ENCODE measurements at regions of chr2 and their contacts with region 1.

Region 1: DNA sequence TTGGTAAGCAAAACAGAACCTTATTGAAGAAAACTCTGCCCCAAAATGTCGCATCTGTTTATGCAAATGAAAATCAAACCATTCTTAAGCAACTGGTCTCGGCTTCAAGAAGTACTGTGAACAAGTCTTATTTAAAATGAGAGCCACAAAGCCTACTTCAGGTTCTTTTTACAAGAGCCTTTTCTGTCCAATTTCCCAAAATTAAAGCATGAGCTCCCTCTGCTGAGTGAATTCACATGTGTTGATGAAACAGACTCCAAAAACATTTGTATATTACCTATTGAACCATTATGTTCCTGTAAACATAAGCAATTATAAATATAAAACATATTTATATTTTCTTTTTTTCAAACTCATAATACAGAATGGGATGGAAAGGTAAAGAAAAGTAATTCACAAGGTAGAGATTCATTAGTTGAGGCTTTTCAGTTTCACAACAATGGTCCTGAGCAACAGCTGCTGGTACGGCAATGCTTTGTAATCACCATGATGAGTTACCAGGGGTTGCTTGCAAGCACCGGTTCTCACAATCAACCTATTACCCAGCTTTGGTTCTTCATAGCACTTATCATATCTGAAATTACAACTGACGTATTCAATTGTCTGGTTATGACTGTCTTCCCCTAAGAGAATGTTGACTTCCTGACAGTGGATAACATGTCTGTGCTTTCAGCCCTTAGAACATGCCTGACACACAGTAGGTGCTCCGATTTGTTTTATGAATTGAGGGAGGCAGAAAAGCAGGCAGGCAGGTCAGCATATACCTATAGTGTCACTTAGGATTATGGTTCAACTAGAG is 108.4 kb upstream of the BZW1 start:
- DNase-seq: peak in 1 of 10 donors; percentile 29

Region 2: DNA sequence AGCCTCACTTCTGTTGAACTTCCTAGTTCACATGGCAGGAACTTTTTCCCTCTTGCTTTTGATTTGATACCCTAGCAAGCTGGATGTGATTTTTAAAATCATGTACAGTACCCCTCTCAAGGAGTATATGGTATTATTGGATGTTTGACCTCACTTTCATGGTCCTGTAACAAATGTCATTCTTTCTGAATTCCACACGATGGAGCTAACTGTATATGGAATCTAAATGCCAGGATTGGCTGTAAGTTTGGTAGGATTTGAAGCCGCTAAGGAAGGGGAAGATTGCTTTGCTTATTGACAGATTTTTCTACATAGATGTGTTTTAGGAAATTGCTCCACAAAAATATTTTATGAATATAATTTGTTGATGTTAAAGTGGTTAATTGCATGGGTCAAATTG is 729.6 kb before region 1 on chr2:
- intact Hi-C with region 1: loop called (anchors 5 kb)
- DNase-seq: no peak

Region 3: DNA sequence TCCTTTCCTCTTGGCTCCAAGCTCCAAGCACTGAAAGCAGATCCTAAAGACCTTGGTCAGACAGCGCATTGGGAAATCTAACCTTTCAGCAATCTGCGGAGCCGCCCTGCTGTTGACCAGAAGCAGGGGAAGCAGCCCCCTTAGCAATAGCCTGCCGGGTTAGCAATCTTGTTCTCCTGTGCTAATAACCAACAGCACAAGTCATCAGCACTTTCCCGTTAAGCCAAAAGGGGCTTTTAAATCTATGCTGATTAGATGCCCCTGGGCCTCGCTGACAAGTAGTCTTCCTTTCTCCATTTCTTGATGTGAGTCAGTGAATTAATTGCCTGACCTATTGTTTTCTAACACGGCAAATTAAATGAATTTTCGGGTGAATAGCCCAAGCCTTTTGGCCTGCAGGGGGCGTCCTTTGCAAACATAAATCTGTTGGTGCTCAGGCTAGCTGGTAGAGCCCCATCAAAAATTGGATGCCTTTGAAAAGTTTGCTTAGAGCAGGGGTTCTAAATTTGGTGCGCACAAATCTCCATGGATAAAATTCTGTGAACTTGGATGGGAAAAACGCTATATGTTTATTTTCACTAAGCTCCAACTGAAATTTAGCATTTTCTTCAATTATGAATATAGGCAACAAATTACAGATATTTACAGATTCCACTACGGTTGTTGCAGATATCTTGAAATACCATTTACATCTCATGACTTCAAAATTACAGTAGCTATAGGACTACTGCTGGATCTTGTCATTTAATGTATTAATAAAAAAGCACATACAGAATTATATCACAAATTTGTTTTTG is 723.3 kb before region 1 on chr2:
- intact Hi-C with region 1: loop called (anchors 5 kb)
- DNase-seq: peak; percentile 66 to 97 (median 90)

Region 4: DNA sequence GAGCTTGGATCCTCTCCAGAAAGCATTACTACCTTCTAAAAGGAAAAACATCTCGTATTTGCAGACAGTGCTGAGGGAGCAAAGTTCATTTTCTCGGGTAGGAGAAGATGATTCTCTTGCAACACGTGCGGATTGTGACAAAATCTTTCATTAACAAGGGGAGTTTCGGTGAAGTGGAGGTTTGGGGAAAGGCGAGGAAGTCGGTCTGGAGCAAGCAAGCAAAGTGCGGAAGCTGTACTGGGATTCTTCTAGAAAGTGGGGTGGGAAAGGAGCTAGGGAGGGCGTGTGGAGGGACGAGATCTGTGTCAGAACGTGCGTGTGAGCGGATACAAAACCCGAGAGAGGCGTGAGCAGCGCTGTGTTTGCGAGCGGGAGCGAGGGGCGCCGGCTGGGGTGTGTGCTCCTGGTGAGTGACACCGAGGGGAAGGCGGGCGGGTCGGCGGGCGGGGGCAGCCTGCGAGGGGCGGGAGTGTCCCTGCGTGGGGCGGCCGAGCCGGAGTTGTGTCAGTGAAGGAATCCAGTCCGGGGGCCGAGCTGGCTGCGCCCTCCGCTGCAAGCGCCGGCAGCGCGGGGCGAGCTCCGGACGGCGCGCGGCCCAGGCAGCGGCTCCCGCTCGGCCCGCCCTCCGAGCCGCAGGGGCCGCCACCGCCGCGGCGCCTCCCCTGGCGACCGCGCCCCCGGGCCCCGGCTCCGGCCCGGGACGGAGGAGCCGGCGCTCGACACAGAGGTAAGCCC is 397.0 kb before region 1 on chr2 and contains the start of gene SPATS2L:
- intact Hi-C with region 1: loop called (anchors 10 kb)
- DNase-seq: peak; percentile 61 to 95 (median 74)

Region 5: GRCh38 chr2:200525882-200526651 is 177.3 kb before region 1 on chr2 and contains the start of gene SGO2:
- intact Hi-C with region 1: loop called (anchors 10 kb)
- DNase-seq: peak; percentile 92 to 99 (median 96)

Region 6: GRCh38 chr2:200585730-200586643 is 117.3 kb before region 1 on chr2 and contains the start of gene AOX1:
- intact Hi-C with region 1: loop called (anchors 10 kb)
- DNase-seq: peak in 7 of 10 donors; percentile 3 to 85 (median 45)

Region 7: GRCh38 chr2:200618587-200619021 is 84.7 kb before region 1 on chr2:
- intact Hi-C with region 1: loop called (anchors 2 kb)
- DNase-seq: peak in 3 of 10 donors; percentile 27 to 48 (median 33)

Measured in posterior cingulate gyrus (tissue), 11 donors.